CD8-positive, alpha-beta T cell (primary cell): ENCODE measurements at regions of chr1 and their contacts with region 1.

Region 1: DNA sequence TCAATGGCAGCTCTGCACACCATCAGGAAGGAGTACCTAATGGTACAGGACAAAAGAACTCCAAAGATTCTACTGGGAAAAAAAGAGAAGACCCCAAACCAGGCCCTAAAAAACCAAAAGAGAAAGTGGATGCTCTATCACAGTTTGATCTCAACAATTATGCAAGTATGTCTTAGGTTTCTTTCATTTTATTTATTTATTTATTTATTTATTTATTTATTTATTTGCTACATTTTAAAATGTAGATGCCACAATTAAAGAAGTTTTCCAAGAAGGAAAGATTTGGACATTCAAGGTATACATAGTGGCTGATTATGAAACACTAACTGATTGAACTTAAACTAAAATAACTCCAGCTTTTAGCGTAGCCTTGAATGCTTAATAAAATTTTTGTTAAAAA is 60.2 kb downstream of the PRRC2C start:
- DNase-seq: no peak
- ATAC-seq: no peak
- H3K4me3 ChIP-seq: no peak overlapping the region
- H3K4me3 Mint-ChIP-seq: no peak overlapping the region
- H3K27ac ChIP-seq: no peak overlapping the region
- H3K27ac Mint-ChIP-seq: peak overlapping the region; percentile 41
- H3K4me1 ChIP-seq: no peaks in the 10 kb centered on the region
- H3K4me1 Mint-ChIP-seq: peaks cover 15% of the 10 kb centered on the region
- H3K27me3 ChIP-seq: no peaks in the 10 kb centered on the region
- H3K27me3 Mint-ChIP-seq: no peaks in the 10 kb centered on the region
- CTCF ChIP-seq: no peak

Region 2: GRCh38 chr1:171245458-171246064 is 300.0 kb before region 1 on chr1:
- CTCF ChIA-PET with region 1: no interaction called
- POLR2A ChIA-PET with region 1: no interaction called
- intact Hi-C with region 1: no loop called
- DNase-seq: peak in 4 of 9 experiments; percentile 15 to 56 (median 30)
- ATAC-seq: no peak
- H3K4me3 ChIP-seq: no peak overlapping the region
- H3K4me3 Mint-ChIP-seq: no peak overlapping the region
- H3K27ac ChIP-seq: no peak overlapping the region
- H3K27ac Mint-ChIP-seq: no peak overlapping the region
- H3K4me1 ChIP-seq: no peaks in the 10 kb centered on the region
- H3K4me1 Mint-ChIP-seq: no peaks in the 10 kb centered on the region
- H3K27me3 ChIP-seq: no peaks in the 10 kb centered on the region
- H3K27me3 Mint-ChIP-seq: peaks cover 18% of the 10 kb centered on the region
- CTCF ChIP-seq: peak; percentile 52

Region 3: DNA sequence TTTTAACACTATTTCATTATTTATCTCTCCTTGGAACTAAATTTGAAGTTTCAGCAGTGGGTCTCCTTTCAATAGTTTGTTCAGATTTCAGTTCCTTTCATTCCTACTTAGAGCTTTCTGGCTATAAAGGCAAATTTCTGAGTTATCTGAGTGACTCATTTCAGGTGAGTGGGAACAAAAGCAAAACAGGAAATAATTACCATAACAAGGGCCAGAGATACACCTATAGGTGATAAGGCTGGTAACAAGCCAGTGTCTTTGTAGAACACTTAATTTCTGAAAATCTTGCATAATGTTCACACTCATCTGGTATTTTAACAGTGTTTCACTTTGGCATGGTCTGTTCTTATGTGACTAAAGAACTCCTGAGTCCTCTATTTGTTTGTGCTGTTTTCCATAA is 124.7 kb before region 1 on chr1:
- CTCF ChIA-PET with region 1: no interaction called
- POLR2A ChIA-PET with region 1: no interaction called
- intact Hi-C with region 1: no loop called
- DNase-seq: peak in 1 of 9 experiments; percentile 8
- ATAC-seq: peak; percentile 59
- H3K4me3 ChIP-seq: no peak overlapping the region
- H3K4me3 Mint-ChIP-seq: no peak overlapping the region
- H3K27ac ChIP-seq: no peak overlapping the region
- H3K27ac Mint-ChIP-seq: peak overlapping the region; percentile 10
- H3K4me1 ChIP-seq: peaks cover 11% of the 10 kb centered on the region
- H3K4me1 Mint-ChIP-seq: peaks cover 17% of the 10 kb centered on the region
- H3K27me3 ChIP-seq: no peaks in the 10 kb centered on the region
- H3K27me3 Mint-ChIP-seq: no peaks in the 10 kb centered on the region
- CTCF ChIP-seq: no peak

Region 4: GRCh38 chr1:171501305-171502024 is 44.1 kb before region 1 on chr1:
- CTCF ChIA-PET with region 1: no interaction called
- POLR2A ChIA-PET with region 1: no interaction called
- intact Hi-C with region 1: no loop called
- DNase-seq: no peak
- ATAC-seq: no peak
- H3K4me3 ChIP-seq: no peak overlapping the region
- H3K4me3 Mint-ChIP-seq: no peak overlapping the region
- H3K27ac ChIP-seq: no peak overlapping the region
- H3K27ac Mint-ChIP-seq: peak overlapping the region; percentile 6
- H3K4me1 ChIP-seq: peaks cover 71% of the 10 kb centered on the region
- H3K4me1 Mint-ChIP-seq: peaks cover 92% of the 10 kb centered on the region
- H3K27me3 ChIP-seq: no peaks in the 10 kb centered on the region
- H3K27me3 Mint-ChIP-seq: no peaks in the 10 kb centered on the region
- CTCF ChIP-seq: no peak

Region 5: GRCh38 chr1:171576144-171576543 is 30.6 kb after region 1 on chr1:
- CTCF ChIA-PET with region 1: no interaction called
- POLR2A ChIA-PET with region 1: interaction called, 3 read pairs
- intact Hi-C with region 1: loop called (anchors 5 kb)
- DNase-seq: no peak
- ATAC-seq: no peak
- H3K4me3 ChIP-seq: no peak overlapping the region
- H3K4me3 Mint-ChIP-seq: no peak overlapping the region
- H3K27ac ChIP-seq: no peak overlapping the region
- H3K27ac Mint-ChIP-seq: no peak overlapping the region
- H3K4me1 ChIP-seq: no peaks in the 10 kb centered on the region
- H3K4me1 Mint-ChIP-seq: peaks cover 6% of the 10 kb centered on the region
- H3K27me3 ChIP-seq: no peaks in the 10 kb centered on the region
- H3K27me3 Mint-ChIP-seq: no peaks in the 10 kb centered on the region
- CTCF ChIP-seq: no peak

Region 6: DNA sequence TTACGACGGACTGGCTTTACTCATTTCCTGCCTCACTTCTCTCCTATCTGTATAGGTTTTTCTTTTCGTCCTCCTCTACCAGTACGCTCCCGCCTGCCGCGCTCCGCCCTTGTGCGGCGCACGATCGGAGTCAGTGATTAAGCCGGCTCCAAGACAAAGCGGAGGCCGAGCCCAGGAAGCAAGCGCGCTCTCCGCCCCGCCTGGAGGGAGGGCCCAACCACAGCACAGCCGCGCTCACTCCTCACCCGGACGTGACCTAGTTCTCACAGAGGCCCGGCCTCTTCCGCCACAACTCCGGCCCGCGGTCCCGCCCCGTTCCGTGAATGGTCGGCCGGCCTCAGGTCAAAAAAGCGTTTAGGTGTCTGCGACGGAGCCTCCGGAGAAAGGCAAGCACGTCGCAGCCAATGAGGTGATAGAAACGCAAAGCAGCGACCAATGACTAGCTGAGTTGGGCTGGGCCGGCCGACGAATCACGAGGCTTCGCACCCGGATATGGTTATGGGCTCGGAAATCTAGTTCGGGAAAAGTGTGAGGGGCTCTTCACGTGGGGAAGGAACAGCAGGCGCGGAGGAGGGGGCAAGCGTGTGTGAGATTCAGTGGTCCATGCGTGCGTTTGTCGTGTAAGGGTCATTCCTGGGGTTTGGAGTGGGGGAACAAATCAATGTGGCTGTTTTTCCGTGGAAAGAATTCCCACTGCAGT is 235.8 kb after region 1 on chr1 and contains the start of gene METTL13:
- CTCF ChIA-PET with region 1: no interaction called
- POLR2A ChIA-PET with region 1: no interaction called
- intact Hi-C with region 1: no loop called
- DNase-seq: peak; percentile 96 to 99 (median 98)
- ATAC-seq: peak; percentile 90
- H3K4me3 ChIP-seq: peak within 1 kb of the TSS; percentile 89 to 92
- H3K4me3 Mint-ChIP-seq: peak within 1 kb of the TSS; percentile 95
- H3K27ac ChIP-seq: peak within 1 kb of the TSS; percentile 75 to 89
- H3K27ac Mint-ChIP-seq: peak within 1 kb of the TSS; percentile 96
- H3K4me1 ChIP-seq: peaks cover 33% of the 10 kb centered on the region
- H3K4me1 Mint-ChIP-seq: peaks cover 54% of the 10 kb centered on the region
- H3K27me3 ChIP-seq: no peaks in the 10 kb centered on the region
- H3K27me3 Mint-ChIP-seq: no peaks in the 10 kb centered on the region
- CTCF ChIP-seq: no peak
- total RNA-seq, gene METTL13: 6.6 to 6.9 TPM